H1 (cell line): ENCODE measurements at regions of chr2 and their contacts with region 1.

Region 1: DNA sequence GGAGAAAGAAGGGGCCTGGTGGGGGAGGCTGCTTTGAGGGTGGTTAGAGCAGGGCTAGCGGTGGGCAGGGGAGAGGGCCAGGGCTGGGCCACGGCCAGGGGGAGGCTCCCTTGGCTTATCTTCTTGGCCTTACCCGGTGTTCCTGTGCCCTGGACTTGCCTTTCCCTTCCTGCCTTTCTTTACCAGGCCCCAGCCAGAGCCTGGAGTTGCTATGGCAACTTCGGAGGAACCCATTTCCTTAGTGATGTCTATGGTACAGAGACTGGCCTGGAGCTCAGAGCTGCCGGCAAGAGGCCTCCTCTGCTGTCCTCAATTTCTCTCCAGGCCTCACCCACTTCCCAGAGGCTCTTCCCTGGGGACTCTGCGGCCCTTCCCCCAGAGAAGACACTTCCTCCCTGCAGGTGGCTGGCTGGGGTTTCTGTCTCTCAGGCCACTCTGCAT is 11.5 kb downstream of the SPEG start:
- DNase-seq: no peak
- H3K4me3 ChIP-seq: no peak overlapping the region
- H3K27ac ChIP-seq: no peak overlapping the region
- H3K4me1 ChIP-seq: peaks cover 0 to 29% (median 14%) of the 10 kb centered on the region in 4 experiments; a peak in 6 of 7 replicates
- H3K27me3 ChIP-seq: peaks cover 6 to 35% (median 28%) of the 10 kb centered on the region in 4 experiments
- CTCF ChIP-seq: no peak
- EP300 ChIP-seq: no peak
- POLR2A ChIP-seq: no peak
- RAD21 ChIP-seq: no peak

Region 2: GRCh38 chr2:219331560-219332213 is 114.4 kb before region 1 on chr2:
- CTCF ChIA-PET with region 1: no interaction called
- POLR2A ChIA-PET with region 1: no interaction called
- DNase-seq: peak in 1 of 2 experiments; percentile 90
- H3K4me3 ChIP-seq: peak overlapping the region in 1 of 4 experiments; percentile 33; a peak in 1 of 8 replicates
- H3K27ac ChIP-seq: no peak overlapping the region
- H3K4me1 ChIP-seq: peaks cover 0 to 3% (median 1%) of the 10 kb centered on the region in 4 experiments; a peak in 5 of 7 replicates
- H3K27me3 ChIP-seq: peaks cover 11 to 37% (median 24%) of the 10 kb centered on the region in 4 experiments
- CTCF ChIP-seq: no peak
- EP300 ChIP-seq: no peak
- POLR2A ChIP-seq: no peak
- RAD21 ChIP-seq: no peak

Region 3: GRCh38 chr2:219344751-219345430 is 101.2 kb before region 1 on chr2:
- CTCF ChIA-PET with region 1: no interaction called
- POLR2A ChIA-PET with region 1: no interaction called
- DNase-seq: no peak
- H3K4me3 ChIP-seq: no peak overlapping the region
- H3K27ac ChIP-seq: no peak overlapping the region
- H3K4me1 ChIP-seq: no peaks in the 10 kb centered on the region
- H3K27me3 ChIP-seq: no peaks in the 10 kb centered on the region; a peak in 2 of 7 replicates
- CTCF ChIP-seq: no peak
- EP300 ChIP-seq: no peak
- POLR2A ChIP-seq: no peak
- RAD21 ChIP-seq: no peak

Region 4: GRCh38 chr2:219459460-219460311 is 13.6 kb after region 1 on chr2:
- CTCF ChIA-PET with region 1: interaction called, 7,248 read pairs
- POLR2A ChIA-PET with region 1: interaction called, 13 read pairs
- DNase-seq: peak in 1 of 2 experiments; percentile 94
- H3K4me3 ChIP-seq: peak overlapping the region in 1 of 4 experiments; percentile 46; a peak in 1 of 8 replicates
- H3K27ac ChIP-seq: no peak overlapping the region
- H3K4me1 ChIP-seq: peaks cover 9 to 23% (median 21%) of the 10 kb centered on the region in 4 experiments
- H3K27me3 ChIP-seq: no peaks in the 10 kb centered on the region; a peak in 1 of 7 replicates
- CTCF ChIP-seq: peak in 2 of 3 experiments; percentile 88 to 98; a peak in 3 of 4 replicates
- EP300 ChIP-seq: no peak
- POLR2A ChIP-seq: no peak
- RAD21 ChIP-seq: peak; percentile 68 to 75